ENCODE measurements at regions of chr12 and their contacts with region 1.

Region 1: DNA sequence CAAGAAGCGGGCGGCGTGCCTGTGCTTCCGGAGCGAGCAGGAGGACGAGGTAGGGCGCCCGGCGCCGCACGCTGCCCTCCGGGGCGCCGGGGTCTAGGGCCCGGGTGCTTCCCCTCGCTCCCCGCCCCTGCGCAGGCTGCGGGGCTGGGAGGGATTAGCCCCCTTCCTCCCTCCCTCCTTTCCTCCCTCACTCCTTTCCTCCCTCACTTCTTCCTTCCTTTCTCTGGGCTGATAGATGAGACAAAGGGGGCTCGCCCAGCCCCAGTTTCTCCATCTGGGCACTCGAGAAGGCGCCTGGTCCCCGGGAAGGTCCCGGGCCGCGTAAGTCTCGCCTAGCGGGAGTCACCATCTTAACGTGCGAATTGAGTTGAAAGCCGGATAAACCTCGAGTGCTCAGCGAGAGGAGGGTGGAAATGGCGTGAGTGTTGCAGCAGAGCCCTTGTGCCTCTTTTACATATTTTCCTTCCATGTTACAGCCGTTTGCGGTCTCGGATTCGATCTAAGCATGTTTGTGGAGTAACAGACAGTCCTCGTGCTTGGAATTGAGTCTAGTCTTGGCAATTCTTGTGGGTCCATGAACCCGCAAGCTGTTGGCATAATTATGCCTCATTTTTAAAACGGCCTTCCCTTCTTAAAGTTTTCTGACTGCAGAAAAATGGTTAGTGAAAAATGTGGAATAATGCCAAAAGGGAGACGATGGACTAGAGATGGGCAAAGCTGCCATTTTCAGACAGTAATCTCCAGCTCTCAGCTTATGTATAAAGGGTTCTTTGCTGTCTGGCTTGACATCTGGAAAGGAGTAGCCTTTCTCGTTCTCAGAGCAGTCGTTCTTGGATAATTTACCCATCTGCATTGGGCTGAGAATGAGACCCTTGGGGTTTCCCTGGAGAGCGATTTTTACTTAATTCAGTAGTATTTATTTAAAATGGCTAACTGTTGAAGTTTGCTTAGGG is 924 bp downstream of the NUDT4 start:
- DNase-seq: no peak
- ATAC-seq: peak; percentile 1

Region 2: GRCh38 chr12:92928962-92929915 is 449.4 kb before region 1 on chr12 and contains the start of gene EEA1:
- intact Hi-C with region 1: loop called (anchors 10 kb)
- DNase-seq: peak; percentile 99
- ATAC-seq: peak; percentile 97
- total RNA-seq, gene EEA1: 25.8 TPM

Region 3: GRCh38 chr12:92987362-92987761 is 391.3 kb before region 1 on chr12:
- intact Hi-C with region 1: loop called (anchors 5 kb)
- DNase-seq: no peak
- ATAC-seq: peak; percentile 80

Region 4: DNA sequence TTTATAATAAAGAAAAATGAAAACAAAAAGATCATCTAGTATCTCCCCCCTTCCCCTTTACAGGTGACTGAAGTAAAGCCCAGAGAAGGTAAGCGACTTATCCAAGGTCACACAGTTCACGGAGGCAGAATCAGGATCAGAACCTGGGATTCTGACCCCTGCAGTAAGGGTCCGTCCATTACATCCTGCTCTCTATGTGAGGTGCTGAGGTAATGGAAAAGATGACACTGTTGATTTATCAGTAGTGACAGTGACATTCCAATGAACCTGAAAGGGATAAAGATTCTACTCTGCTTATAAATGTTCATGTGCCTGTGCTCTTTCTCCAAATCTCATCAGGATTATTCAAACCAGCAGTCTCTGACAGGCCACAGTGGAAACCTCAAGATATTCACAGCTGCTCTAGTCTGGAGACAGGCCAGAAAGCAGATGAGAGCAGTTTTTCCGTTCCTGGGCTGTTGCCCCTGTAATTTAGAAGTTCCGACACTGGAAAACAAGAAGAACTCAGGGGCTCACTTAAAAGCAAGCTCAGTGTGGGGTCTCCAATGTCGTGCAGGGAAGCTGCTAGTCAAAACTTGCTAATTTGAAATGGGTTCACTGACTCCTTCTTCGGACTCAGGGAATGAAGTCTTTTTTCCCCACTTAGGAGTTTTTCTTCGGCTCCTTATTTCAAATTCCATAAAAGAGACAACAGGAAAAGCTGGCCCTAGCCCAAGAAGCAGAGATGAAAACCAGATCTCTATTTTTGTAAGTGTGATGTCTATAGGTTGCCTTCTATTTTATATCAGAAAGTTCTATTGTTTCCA is 317.8 kb before region 1 on chr12:
- intact Hi-C with region 1: loop called (anchors 5 kb)
- DNase-seq: no peak
- ATAC-seq: peak; percentile 26

Region 5: GRCh38 chr12:93146263-93146939 is 232.2 kb before region 1 on chr12:
- intact Hi-C with region 1: no loop called
- DNase-seq: no peak
- ATAC-seq: no peak

Region 6: DNA sequence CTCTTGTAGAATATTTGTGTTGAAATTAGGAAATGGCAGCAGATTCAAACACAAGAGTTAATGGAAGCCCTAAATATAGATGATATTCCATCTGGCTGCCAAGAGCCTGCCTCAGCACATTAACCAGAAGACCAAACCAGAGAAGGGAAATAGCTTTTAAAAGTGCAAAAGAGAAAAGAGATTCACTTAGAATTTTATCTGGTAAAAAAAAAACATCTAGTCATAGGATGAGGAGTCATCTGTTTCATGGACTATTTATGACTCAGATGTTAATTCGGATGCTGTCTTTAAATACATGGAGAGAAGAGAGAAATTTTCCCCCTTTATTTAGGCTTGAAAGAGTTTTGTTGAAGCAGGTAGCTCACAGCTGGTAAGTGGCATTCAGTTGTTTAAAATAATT is 202.5 kb before region 1 on chr12:
- intact Hi-C with region 1: loop called (anchors 2 kb)
- DNase-seq: no peak
- ATAC-seq: no peak

Region 7: DNA sequence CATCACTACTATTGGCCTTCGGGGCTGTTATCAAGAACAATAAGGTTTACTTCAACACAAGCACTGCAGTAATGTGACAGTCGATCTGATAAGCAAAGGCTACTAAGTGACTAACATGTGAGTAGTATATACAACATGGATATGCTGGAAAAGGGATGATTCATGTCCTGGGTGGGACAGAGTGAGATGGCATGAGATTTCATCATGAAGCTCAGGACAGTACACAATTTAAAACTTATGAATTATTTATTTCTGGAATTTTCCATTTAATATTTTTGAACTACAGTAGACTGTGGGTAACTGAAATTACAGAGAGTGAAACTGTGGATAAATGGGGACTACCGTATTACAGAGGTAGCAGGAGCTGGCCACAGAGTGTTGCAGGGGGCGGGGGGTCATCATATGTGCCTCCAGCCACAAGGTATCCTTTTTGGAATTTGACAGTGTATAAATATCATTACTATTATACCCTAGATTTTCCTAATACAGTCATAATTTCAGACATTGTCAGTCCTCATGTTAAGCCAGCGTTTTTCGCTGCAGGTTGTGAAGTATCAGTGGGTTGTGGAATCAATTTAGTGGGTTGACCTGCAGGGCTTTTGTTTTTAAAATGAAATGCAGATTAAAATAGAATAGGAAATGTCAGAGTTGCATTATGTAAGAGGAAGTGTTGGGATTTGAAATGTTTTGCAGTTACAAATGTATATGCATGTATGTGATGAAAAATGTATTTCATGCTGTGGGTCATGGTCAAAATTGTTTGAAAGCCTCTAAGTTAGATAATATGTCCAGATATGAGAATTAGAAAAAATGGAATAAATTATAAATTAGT is 148.9 kb before region 1 on chr12:
- intact Hi-C with region 1: loop called (anchors 10 kb)
- DNase-seq: no peak
- ATAC-seq: no peak

Region 8: GRCh38 chr12:93302331-93303229 is 76.1 kb before region 1 on chr12:
- intact Hi-C with region 1: loop called (anchors 2 kb)
- DNase-seq: no peak
- ATAC-seq: peak; percentile 80

Region 9: GRCh38 chr12:93582116-93582772 is 203.6 kb after region 1 on chr12:
- intact Hi-C with region 1: no loop called
- DNase-seq: no peak
- ATAC-seq: no peak

Measured in Right ventricle myocardium inferior (tissue), 1 donor.